ENCODE measurements at regions of chr16 and their contacts with region 1.

Region 1: DNA sequence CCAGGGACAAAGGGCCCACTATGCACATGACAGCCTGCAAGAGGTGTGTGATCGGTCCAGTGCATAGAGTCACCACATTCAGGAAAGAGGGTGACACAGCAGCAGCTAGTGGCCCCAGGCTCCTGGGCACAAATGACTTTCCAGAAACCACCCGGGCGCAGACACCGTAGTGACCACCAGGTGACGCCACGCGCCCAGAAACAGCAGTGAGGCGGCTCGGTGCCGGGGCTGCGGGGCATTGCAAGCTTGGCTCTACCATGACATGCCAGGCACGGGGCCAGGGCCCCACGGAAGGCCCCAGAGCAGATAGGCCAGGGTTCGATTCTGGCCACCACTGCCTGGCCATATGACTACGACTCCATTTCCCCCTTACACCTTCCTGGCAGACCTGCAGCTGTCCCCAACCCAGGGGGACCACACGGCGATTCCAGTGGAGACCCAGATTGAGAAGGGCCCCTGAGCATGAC is 6.7 kb downstream of the RHBDF1 start:
- DNase-seq: peak; percentile 93
- H3K4me3 Mint-ChIP-seq: no peak overlapping the region
- H3K27ac Mint-ChIP-seq: no peak overlapping the region
- H3K4me1 Mint-ChIP-seq: no peaks in the 10 kb centered on the region
- H3K27me3 Mint-ChIP-seq: peaks cover 3% of the 10 kb centered on the region

Region 2: GRCh38 chr16:53346-54236 is 12.1 kb before region 1 on chr16 and contains the starts of genes POLR3K and SNRNP25:
- CTCF ChIA-PET with region 1: interaction called, 17 read pairs
- POLR2A ChIA-PET with region 1: interaction called, 6 read pairs
- intact Hi-C with region 1: no loop called
- DNase-seq: peak; percentile 99
- H3K4me3 Mint-ChIP-seq: peak within 1 kb of the TSS; percentile 87
- H3K27ac Mint-ChIP-seq: peak within 1 kb of the TSS; percentile 90
- H3K4me1 Mint-ChIP-seq: peaks cover 27% of the 10 kb centered on the region
- H3K27me3 Mint-ChIP-seq: no peaks in the 10 kb centered on the region
- total RNA-seq, gene POLR3K: 39.9 to 45.3 TPM
- total RNA-seq, gene SNRNP25: 48.5 to 51.1 TPM

Region 3: GRCh38 chr16:84718-85406 is 19.2 kb after region 1 on chr16:
- CTCF ChIA-PET with region 1: interaction called, 37 read pairs
- POLR2A ChIA-PET with region 1: interaction called, 4 read pairs
- intact Hi-C with region 1: loop called (anchors 2 kb)
- DNase-seq: peak; percentile 88
- H3K4me3 Mint-ChIP-seq: no peak overlapping the region
- H3K27ac Mint-ChIP-seq: peak overlapping the region; percentile 88
- H3K4me1 Mint-ChIP-seq: peaks cover 25% of the 10 kb centered on the region
- H3K27me3 Mint-ChIP-seq: no peaks in the 10 kb centered on the region

Region 4: GRCh38 chr16:106623-107324 is 41.1 kb after region 1 on chr16:
- CTCF ChIA-PET with region 1: interaction called, 384 read pairs
- POLR2A ChIA-PET with region 1: no interaction called
- intact Hi-C with region 1: no loop called
- DNase-seq: peak; percentile 62
- H3K4me3 Mint-ChIP-seq: no peak overlapping the region
- H3K27ac Mint-ChIP-seq: no peak overlapping the region
- H3K4me1 Mint-ChIP-seq: no peaks in the 10 kb centered on the region
- H3K27me3 Mint-ChIP-seq: no peaks in the 10 kb centered on the region

Region 5: GRCh38 chr16:361872-362701 is 296.4 kb after region 1 on chr16:
- CTCF ChIA-PET with region 1: interaction called, 21 read pairs
- POLR2A ChIA-PET with region 1: no interaction called
- intact Hi-C with region 1: no loop called
- DNase-seq: peak; percentile 85
- H3K4me3 Mint-ChIP-seq: peak overlapping the region; percentile 43
- H3K27ac Mint-ChIP-seq: no peak overlapping the region
- H3K4me1 Mint-ChIP-seq: peaks cover 6% of the 10 kb centered on the region
- H3K27me3 Mint-ChIP-seq: peaks cover 4% of the 10 kb centered on the region